Heart left ventricle (tissue), 16 donors: ENCODE measurements at regions of chrX and their contacts with region 1.

Region 1: DNA sequence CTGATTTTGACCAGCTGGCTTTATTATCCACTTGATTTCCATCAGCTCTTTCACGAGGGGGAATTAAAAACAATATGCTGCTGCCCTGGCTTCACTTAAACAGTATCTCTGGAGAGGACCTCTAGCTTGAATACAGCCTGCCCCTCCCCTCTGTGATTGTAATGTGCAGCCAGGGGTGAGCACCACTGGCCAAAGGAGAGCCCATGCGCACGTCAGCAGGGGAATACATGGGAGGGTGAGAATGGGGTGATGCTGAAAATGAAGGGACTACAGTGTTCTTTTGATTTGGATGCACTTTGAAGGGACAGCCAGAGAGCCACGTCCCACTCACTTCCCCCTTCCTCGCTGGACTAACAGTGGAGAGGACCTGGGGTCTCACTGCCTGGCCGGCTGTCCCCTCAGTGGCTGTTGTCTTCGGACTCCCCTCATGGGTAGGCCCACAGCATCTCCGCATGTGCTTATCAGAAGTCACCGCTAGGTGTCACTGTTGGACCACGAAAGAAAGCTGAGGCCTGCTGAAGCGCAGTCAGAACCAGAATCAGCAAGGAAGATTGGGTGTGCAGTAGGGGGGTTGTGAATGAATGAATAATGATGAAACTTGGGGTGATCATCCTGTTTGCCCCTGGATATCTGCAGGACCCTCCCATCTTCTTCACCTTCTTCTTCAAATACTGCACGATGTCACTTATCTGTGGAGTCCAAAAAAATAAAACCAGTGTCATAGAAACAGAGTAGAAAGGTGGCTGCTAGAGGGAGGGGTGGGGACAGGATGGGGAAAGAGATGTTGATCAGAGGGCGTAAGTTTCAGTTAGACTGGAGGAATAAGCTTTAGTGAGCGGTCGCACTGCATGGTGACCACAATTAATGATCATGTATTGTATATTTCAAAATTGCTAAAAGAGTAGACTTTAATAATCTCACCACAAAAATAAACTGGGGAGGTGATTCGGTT is 32.8 kb downstream of the CLCN4 start:
- DNase-seq: peak; percentile 52 to 72 (median 66)
- ATAC-seq: peak; percentile 73 to 92 (median 88)
- H3K4me3 ChIP-seq: no peak overlapping the region
- H3K27ac ChIP-seq: no peak overlapping the region
- H3K4me1 ChIP-seq: peaks cover 0 to 12% (median 0%) of the 10 kb centered on the region in 12 donors
- H3K27me3 ChIP-seq: peaks cover 0 to 7% (median 0%) of the 10 kb centered on the region in 9 donors
- CTCF ChIP-seq: peak; percentile 54 to 86 (median 70)
- POLR2A ChIP-seq: no peak

Region 2: GRCh38 chrX:10156199-10157031 is 33.2 kb before region 1 on chrX and contains the start of gene CLCN4:
- intact Hi-C with region 1: no loop called
- DNase-seq: peak; percentile 64 to 83 (median 76)
- ATAC-seq: peak; percentile 85 to 93 (median 88)
- H3K4me3 ChIP-seq: peak within 1 kb of the TSS in 11 of 12 donors; percentile 16 to 61 (median 45)
- H3K27ac ChIP-seq: peak within 1 kb of the TSS; percentile 53 to 85 (median 68)
- H3K4me1 ChIP-seq: peaks cover 0 to 21% (median 5%) of the 10 kb centered on the region in 12 donors
- H3K27me3 ChIP-seq: peaks cover 0 to 67% (median 0%) of the 10 kb centered on the region in 9 donors
- CTCF ChIP-seq: no peak
- POLR2A ChIP-seq: no peak
- total RNA-seq, gene CLCN4: 20.3 to 39.0 (median 29.8) TPM

Region 3: DNA sequence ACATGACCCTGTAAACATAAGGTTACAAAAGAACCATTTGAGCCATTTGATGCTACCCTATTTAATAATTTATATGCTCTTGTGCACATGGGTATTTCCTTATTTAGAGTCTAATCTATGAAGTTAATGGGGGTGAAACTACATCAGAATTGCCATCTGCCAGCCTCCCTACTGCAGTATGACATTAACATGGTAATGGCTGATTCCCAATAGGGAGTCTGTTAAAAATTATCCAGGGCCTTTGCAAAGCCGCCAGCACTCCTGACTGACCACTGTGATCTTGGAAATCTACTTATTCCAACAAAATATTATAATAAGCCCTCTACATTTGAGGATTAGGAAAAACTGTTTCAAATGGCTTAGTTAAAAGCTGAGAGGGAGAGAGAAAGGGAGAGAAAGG is 120.9 kb after region 1 on chrX:
- intact Hi-C with region 1: no loop called
- DNase-seq: no peak
- ATAC-seq: no peak
- H3K4me3 ChIP-seq: no peak overlapping the region
- H3K27ac ChIP-seq: no peak overlapping the region
- H3K4me1 ChIP-seq: no peaks in the 10 kb centered on the region
- H3K27me3 ChIP-seq: no peaks in the 10 kb centered on the region
- CTCF ChIP-seq: no peak
- POLR2A ChIP-seq: no peak

Region 4: GRCh38 chrX:10326578-10326977 is 137.0 kb after region 1 on chrX:
- intact Hi-C with region 1: loop called in 5 of 10 experiments (anchors 5 to 10 kb)
- DNase-seq: no peak
- ATAC-seq: peak in 3 of 4 donors; percentile 60 to 71 (median 61)
- H3K4me3 ChIP-seq: no peak overlapping the region
- H3K27ac ChIP-seq: no peak overlapping the region
- H3K4me1 ChIP-seq: no peaks in the 10 kb centered on the region
- H3K27me3 ChIP-seq: no peaks in the 10 kb centered on the region
- CTCF ChIP-seq: peak in 9 of 12 donors; percentile 9 to 38 (median 25)
- POLR2A ChIP-seq: no peak

Region 5: GRCh38 chrX:10628906-10629305 is 439.3 kb after region 1 on chrX:
- intact Hi-C with region 1: loop called in 1 of 10 experiments (anchors 5 kb)
- DNase-seq: no peak
- ATAC-seq: no peak
- H3K4me3 ChIP-seq: no peak overlapping the region
- H3K27ac ChIP-seq: no peak overlapping the region
- H3K4me1 ChIP-seq: peaks cover 0 to under 1% (median 0%) of the 10 kb centered on the region in 12 donors
- H3K27me3 ChIP-seq: no peaks in the 10 kb centered on the region
- CTCF ChIP-seq: no peak
- POLR2A ChIP-seq: no peak

Region 6: GRCh38 chrX:10722851-10723250 is 533.3 kb after region 1 on chrX:
- intact Hi-C with region 1: loop called (anchors 1 to 10 kb)
- DNase-seq: peak in 3 of 5 donors; percentile 12 to 33 (median 32)
- ATAC-seq: peak; percentile 58 to 78 (median 66)
- H3K4me3 ChIP-seq: no peak overlapping the region
- H3K27ac ChIP-seq: peak overlapping the region in 1 of 12 donors; percentile 6
- H3K4me1 ChIP-seq: no peaks in the 10 kb centered on the region
- H3K27me3 ChIP-seq: no peaks in the 10 kb centered on the region
- CTCF ChIP-seq: peak; percentile 54 to 77 (median 65)
- POLR2A ChIP-seq: no peak

Region 7: GRCh38 chrX:11137543-11138139 is 948.0 kb after region 1 on chrX:
- intact Hi-C with region 1: loop called in 6 of 10 experiments (anchors 2 to 10 kb)
- DNase-seq: no peak
- ATAC-seq: no peak
- H3K4me3 ChIP-seq: no peak overlapping the region
- H3K27ac ChIP-seq: no peak overlapping the region
- H3K4me1 ChIP-seq: peaks cover 0 to 7% (median 0%) of the 10 kb centered on the region in 12 donors
- H3K27me3 ChIP-seq: peaks cover 0 to 6% (median 0%) of the 10 kb centered on the region in 9 donors
- CTCF ChIP-seq: peak; percentile 50 to 87 (median 66)
- POLR2A ChIP-seq: no peak